CD8-positive, alpha-beta T cell (primary cell): ENCODE measurements at regions of chr17 and their contacts with region 1.

Region 1: DNA sequence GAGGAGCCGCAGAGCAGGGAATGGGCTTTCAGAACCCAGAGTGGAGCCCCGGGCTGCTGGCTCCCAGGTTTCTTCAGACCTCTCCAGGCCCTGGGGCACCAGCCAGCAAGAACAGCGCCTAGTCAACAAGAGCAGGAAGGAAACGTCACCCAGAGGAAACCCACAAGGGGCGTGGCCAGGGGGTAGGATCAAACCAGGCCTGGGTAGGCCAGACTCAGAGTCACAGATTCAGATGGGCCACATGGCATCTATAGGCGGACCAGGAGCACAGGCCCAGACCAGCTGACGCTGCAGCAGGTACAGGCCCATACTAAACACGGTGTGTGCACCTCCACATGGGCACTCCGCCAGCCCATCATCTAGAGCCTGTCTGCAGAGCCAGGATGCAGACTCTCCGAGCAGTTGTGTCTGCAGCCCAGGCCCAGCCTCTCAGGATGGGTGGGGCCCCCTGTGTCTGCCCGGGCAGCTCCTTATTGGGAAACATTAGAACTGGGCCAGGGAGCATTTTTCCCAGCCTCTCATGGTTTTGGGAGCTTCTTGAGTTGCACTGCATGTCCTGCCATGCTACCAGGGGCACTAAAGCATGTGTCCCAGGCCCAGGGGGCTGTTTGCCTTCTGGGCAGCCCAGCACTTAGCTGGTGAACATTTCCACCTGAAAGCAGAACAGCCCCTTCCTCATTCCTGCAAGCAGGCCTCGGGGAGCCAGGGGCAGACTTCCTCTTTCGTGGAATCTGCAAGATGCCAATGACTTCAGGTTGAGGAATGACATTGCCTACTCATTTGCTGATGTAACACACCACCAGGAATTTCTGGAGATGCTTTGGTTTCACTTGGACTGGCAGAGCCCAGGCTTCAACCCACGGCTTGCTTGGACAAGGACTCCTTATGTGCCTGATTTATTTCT is at the start of gene NLRP1:
- DNase-seq: peak; percentile 89 to 98 (median 95)
- ATAC-seq: peak; percentile 90
- H3K4me3 ChIP-seq: peak within 1 kb of the TSS; percentile 82 to 87
- H3K4me3 Mint-ChIP-seq: peak within 1 kb of the TSS; percentile 97
- H3K27ac ChIP-seq: peak within 1 kb of the TSS; percentile 93 to 98
- H3K27ac Mint-ChIP-seq: peak within 1 kb of the TSS; percentile 99
- H3K4me1 ChIP-seq: peaks cover 66% of the 10 kb centered on the region
- H3K4me1 Mint-ChIP-seq: peaks cover 68% of the 10 kb centered on the region
- H3K27me3 ChIP-seq: no peaks in the 10 kb centered on the region
- H3K27me3 Mint-ChIP-seq: no peaks in the 10 kb centered on the region
- CTCF ChIP-seq: no peak
- total RNA-seq, gene NLRP1: 231 to 241 TPM

Region 2: GRCh38 chr17:5486204-5487124 is 98.2 kb before region 1 on chr17 and contains the start of gene MIS12:
- CTCF ChIA-PET with region 1: no interaction called
- POLR2A ChIA-PET with region 1: interaction called, 3 read pairs
- intact Hi-C with region 1: loop called (anchors 1 kb)
- DNase-seq: peak; percentile 93 to 100 (median 97)
- ATAC-seq: peak; percentile 89
- H3K4me3 ChIP-seq: peak within 1 kb of the TSS; percentile 94
- H3K4me3 Mint-ChIP-seq: peak within 1 kb of the TSS; percentile 94
- H3K27ac ChIP-seq: peak within 1 kb of the TSS; percentile 98 to 99
- H3K27ac Mint-ChIP-seq: peak within 1 kb of the TSS; percentile 95
- H3K4me1 ChIP-seq: peaks cover 28% of the 10 kb centered on the region
- H3K4me1 Mint-ChIP-seq: peaks cover 60% of the 10 kb centered on the region
- H3K27me3 ChIP-seq: no peaks in the 10 kb centered on the region
- H3K27me3 Mint-ChIP-seq: no peaks in the 10 kb centered on the region
- CTCF ChIP-seq: no peak
- total RNA-seq, gene MIS12: 21.9 to 24.4 TPM

Region 3: GRCh38 chr17:6421700-6422604 is 837.3 kb after region 1 on chr17:
- CTCF ChIA-PET with region 1: interaction called, 27 read pairs
- POLR2A ChIA-PET with region 1: interaction called, 3 read pairs
- intact Hi-C with region 1: loop called (anchors 1 kb)
- DNase-seq: peak; percentile 47 to 83 (median 73)
- ATAC-seq: peak; percentile 51
- H3K4me3 ChIP-seq: no peak overlapping the region
- H3K4me3 Mint-ChIP-seq: no peak overlapping the region
- H3K27ac ChIP-seq: no peak overlapping the region
- H3K27ac Mint-ChIP-seq: no peak overlapping the region
- H3K4me1 ChIP-seq: peaks cover 9% of the 10 kb centered on the region
- H3K4me1 Mint-ChIP-seq: no peaks in the 10 kb centered on the region
- H3K27me3 ChIP-seq: no peaks in the 10 kb centered on the region
- H3K27me3 Mint-ChIP-seq: peaks cover 5% of the 10 kb centered on the region
- CTCF ChIP-seq: peak; percentile 68

Region 4: GRCh38 chr17:6443692-6444569 is 859.3 kb after region 1 on chr17 and contains the start of gene PIMREG:
- CTCF ChIA-PET with region 1: interaction called, 8 read pairs
- POLR2A ChIA-PET with region 1: interaction called, 3 read pairs
- intact Hi-C with region 1: loop called in 1 of 2 experiments (anchors 1 kb)
- DNase-seq: peak; percentile 79 to 91 (median 90)
- ATAC-seq: peak; percentile 96
- H3K4me3 ChIP-seq: peak within 1 kb of the TSS; percentile 68 to 94
- H3K4me3 Mint-ChIP-seq: peak within 1 kb of the TSS; percentile 85
- H3K27ac ChIP-seq: peak within 1 kb of the TSS; percentile 25 to 37
- H3K27ac Mint-ChIP-seq: peak within 1 kb of the TSS; percentile 77
- H3K4me1 ChIP-seq: peaks cover 6% of the 10 kb centered on the region
- H3K4me1 Mint-ChIP-seq: peaks cover 12% of the 10 kb centered on the region
- H3K27me3 ChIP-seq: no peaks in the 10 kb centered on the region
- H3K27me3 Mint-ChIP-seq: peaks cover 10% of the 10 kb centered on the region
- CTCF ChIP-seq: no peak
- total RNA-seq, gene PIMREG: not detected

Region 5: GRCh38 chr17:6651357-6651918 is 1066.8 kb after region 1 on chr17 and contains the starts of genes C17orf100 and MED31:
- CTCF ChIA-PET with region 1: no interaction called
- POLR2A ChIA-PET with region 1: no interaction called
- intact Hi-C with region 1: loop called (anchors 5 to 10 kb)
- DNase-seq: peak; percentile 90 to 97 (median 94)
- ATAC-seq: peak; percentile 88
- H3K4me3 ChIP-seq: peak within 1 kb of the TSS; percentile 84 to 86
- H3K4me3 Mint-ChIP-seq: peak within 1 kb of the TSS; percentile 97
- H3K27ac ChIP-seq: peak within 1 kb of the TSS; percentile 99 to 100
- H3K27ac Mint-ChIP-seq: peak within 1 kb of the TSS; percentile 100
- H3K4me1 ChIP-seq: peaks cover 23% of the 10 kb centered on the region
- H3K4me1 Mint-ChIP-seq: peaks cover 69% of the 10 kb centered on the region
- H3K27me3 ChIP-seq: no peaks in the 10 kb centered on the region
- H3K27me3 Mint-ChIP-seq: no peaks in the 10 kb centered on the region
- CTCF ChIP-seq: no peak
- total RNA-seq, gene C17orf100: 0.39 to 0.73 TPM
- total RNA-seq, gene MED31: 21.4 to 25.6 TPM

Region 6: DNA sequence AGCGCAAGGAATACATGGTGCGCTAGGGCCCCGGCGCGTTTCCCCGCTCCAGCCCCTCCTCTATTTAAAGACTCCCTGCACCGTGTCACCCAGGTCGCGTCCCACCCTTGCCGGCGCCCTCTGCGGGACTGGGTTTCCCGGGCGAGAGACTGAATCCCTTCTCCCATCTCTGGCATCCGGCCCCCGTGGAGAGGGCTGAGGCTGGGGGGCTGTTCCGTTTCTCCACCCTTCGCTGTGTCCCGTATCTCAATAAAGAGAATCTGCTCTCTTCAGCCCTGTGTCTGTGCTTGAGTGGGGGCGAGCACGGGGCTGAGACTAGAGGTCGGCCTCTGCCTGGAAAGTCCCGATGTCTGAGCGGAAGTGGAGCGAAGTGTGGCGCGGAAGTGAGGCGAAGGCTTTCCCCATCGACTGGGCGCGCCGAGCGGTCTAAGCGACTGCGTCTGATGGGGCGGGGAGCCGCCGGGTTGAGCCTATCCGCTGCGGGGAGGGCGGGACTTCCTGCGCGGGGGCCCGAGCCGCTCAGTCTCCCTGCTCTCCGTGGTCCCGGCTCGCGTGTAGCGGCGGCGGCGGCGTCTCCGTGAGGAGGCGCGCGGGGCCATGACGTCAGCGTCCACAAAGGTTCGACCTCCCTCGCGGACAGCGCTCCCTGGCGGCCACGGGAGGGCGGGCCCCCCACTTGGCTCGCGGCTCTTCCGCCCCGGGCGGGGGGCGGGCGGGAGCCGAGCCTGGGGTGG is 1429.8 kb after region 1 on chr17:
- CTCF ChIA-PET with region 1: no interaction called
- POLR2A ChIA-PET with region 1: no interaction called
- intact Hi-C with region 1: loop called in 1 of 2 experiments (anchors 10 kb)
- DNase-seq: peak; percentile 94 to 100 (median 97)
- ATAC-seq: peak; percentile 79
- H3K4me3 ChIP-seq: peak overlapping the region; percentile 69 to 70
- H3K4me3 Mint-ChIP-seq: peak overlapping the region; percentile 98
- H3K27ac ChIP-seq: peak overlapping the region; percentile 95 to 99
- H3K27ac Mint-ChIP-seq: peak overlapping the region; percentile 100
- H3K4me1 ChIP-seq: peaks cover 63% of the 10 kb centered on the region
- H3K4me1 Mint-ChIP-seq: peaks cover 78% of the 10 kb centered on the region
- H3K27me3 ChIP-seq: no peaks in the 10 kb centered on the region
- H3K27me3 Mint-ChIP-seq: no peaks in the 10 kb centered on the region
- CTCF ChIP-seq: peak; percentile 61